ENCODE measurements at regions of chr14 and their contacts with region 1.

Region 1: GRCh38 chr14:76352639-76353281 is 23.2 kb upstream of the ESRRB start:
- DNase-seq: peak; percentile 68 to 82
- H3K4me3 ChIP-seq: peak overlapping the region; percentile 16
- H3K4me3 Mint-ChIP-seq: peak overlapping the region; percentile 48
- H3K27ac Mint-ChIP-seq: no peak overlapping the region
- H3K4me1 ChIP-seq: no peaks in the 10 kb centered on the region
- H3K4me1 Mint-ChIP-seq: no peaks in the 10 kb centered on the region
- H3K27me3 ChIP-seq: no peaks in the 10 kb centered on the region
- H3K27me3 Mint-ChIP-seq: peaks cover 15% of the 10 kb centered on the region
- CTCF ChIP-seq: peak; percentile 88 to 92

Region 2: DNA sequence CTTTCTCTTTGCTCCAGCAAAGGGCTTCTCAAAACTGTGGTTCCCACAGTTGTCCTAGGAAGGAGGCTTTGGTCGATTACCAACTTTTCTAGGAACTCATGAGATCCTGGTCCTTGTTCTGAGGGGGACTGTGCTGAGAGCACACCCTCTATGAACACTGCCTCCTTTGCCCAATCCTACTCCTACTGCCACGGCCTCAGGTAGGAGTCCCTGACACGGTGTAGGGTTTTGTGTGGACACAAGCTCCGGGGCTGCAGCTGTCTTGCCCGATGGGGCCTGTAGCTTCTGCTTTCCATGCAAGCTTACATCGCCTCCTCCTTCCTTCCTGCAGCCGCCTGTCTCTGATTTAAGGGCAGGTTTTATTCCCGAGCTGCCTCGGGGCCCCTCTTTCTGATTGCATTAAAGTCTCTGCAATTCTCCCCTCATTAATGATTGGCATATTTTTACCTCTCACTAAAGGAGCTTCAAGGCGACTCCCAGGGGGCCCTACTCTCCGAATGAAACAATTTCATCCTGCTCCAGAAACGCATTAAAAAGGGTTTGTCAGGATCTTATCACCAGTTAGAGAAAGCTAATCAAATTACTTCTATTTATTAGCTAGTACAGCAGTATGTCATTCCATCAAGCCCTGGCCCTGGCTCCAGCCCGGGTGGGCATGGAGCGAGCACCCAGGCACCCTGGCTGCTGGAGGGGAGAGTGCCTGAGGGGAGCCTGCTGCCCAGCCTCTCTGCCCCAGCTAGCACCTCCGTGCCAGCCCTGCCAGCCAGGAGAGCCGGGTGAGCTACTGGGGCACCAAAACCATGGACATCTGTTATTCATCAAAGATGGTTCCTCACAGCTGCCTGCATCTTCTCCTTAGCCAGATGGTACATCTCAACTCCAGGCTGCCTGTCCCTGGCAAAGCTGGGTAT is 14.9 kb before region 1 on chr14:
- CTCF ChIA-PET with region 1: no interaction called
- POLR2A ChIA-PET with region 1: no interaction called
- intact Hi-C with region 1: no loop called
- DNase-seq: no peak
- H3K4me3 ChIP-seq: no peak overlapping the region
- H3K4me3 Mint-ChIP-seq: no peak overlapping the region
- H3K27ac Mint-ChIP-seq: no peak overlapping the region
- H3K4me1 ChIP-seq: no peaks in the 10 kb centered on the region
- H3K4me1 Mint-ChIP-seq: no peaks in the 10 kb centered on the region
- H3K27me3 ChIP-seq: no peaks in the 10 kb centered on the region
- H3K27me3 Mint-ChIP-seq: peaks cover 19% of the 10 kb centered on the region
- CTCF ChIP-seq: no peak

Region 3: GRCh38 chr14:76375484-76375883 is 22.7 kb after region 1 on chr14:
- CTCF ChIA-PET with region 1: no interaction called
- POLR2A ChIA-PET with region 1: interaction called, 24 read pairs
- intact Hi-C with region 1: no loop called
- DNase-seq: no peak
- H3K4me3 ChIP-seq: no peak overlapping the region
- H3K4me3 Mint-ChIP-seq: no peak overlapping the region
- H3K27ac Mint-ChIP-seq: no peak overlapping the region
- H3K4me1 ChIP-seq: no peaks in the 10 kb centered on the region
- H3K4me1 Mint-ChIP-seq: peaks cover 6% of the 10 kb centered on the region
- H3K27me3 ChIP-seq: peaks cover 8% of the 10 kb centered on the region
- H3K27me3 Mint-ChIP-seq: peaks cover 31% of the 10 kb centered on the region
- CTCF ChIP-seq: no peak

Region 4: DNA sequence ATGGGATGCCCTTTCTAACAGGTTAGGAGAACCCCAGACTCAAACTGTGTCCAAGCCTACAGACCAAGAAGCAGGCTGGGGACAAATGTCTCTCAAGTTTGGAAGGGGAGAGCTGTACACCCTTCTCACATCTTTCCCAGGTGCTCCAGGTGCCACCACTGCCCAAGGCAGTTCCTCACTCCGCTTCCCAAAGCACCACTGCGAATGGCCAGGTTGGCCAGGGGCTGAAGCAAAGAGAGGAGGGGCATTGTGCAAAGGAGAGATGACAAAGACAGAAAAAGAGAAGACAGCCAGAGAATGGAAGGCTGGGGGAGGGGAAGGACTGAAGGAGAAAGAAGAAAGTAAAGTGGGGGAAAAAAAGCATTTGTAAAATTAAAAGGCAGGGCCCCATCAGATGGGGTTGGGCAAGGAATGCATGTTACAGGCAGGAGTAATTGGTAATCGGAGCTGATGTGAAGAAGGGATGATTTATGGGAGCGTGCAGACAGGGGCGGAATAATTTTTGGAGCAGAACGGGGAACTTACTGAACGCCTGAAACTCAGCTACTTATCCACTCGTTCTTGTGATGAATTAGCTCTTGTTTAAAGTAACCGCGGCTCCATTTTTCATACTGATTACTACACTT is 188.9 kb after region 1 on chr14:
- CTCF ChIA-PET with region 1: no interaction called
- POLR2A ChIA-PET with region 1: no interaction called
- intact Hi-C with region 1: no loop called
- DNase-seq: no peak
- H3K4me3 ChIP-seq: no peak overlapping the region
- H3K4me3 Mint-ChIP-seq: no peak overlapping the region
- H3K27ac Mint-ChIP-seq: no peak overlapping the region
- H3K4me1 ChIP-seq: no peaks in the 10 kb centered on the region
- H3K4me1 Mint-ChIP-seq: no peaks in the 10 kb centered on the region
- H3K27me3 ChIP-seq: no peaks in the 10 kb centered on the region; the same call in 1 of the 2 replicates
- H3K27me3 Mint-ChIP-seq: peaks cover 14% of the 10 kb centered on the region
- CTCF ChIP-seq: no peak